OCI-LY7 (cell line): ENCODE measurements at regions of chr7 and their contacts with region 1.

Region 1: GRCh38 chr7:69953136-69954067 is 355.1 kb downstream of the AUTS2 start:
- DNase-seq: peak; percentile 86
- H3K4me3 ChIP-seq: peak overlapping the region; percentile 42
- H3K27ac ChIP-seq: peak overlapping the region; percentile 96
- H3K4me1 ChIP-seq: peaks cover 70% of the 10 kb centered on the region
- CTCF ChIP-seq: no peak

Region 2: GRCh38 chr7:69564454-69565417 is 388.7 kb before region 1 on chr7:
- CTCF ChIA-PET with region 1: no interaction called
- POLR2A ChIA-PET with region 1: no interaction called
- intact Hi-C with region 1: no loop called
- DNase-seq: peak; percentile 48
- H3K4me3 ChIP-seq: no peak overlapping the region
- H3K27ac ChIP-seq: no peak overlapping the region
- H3K4me1 ChIP-seq: peaks cover 7% of the 10 kb centered on the region
- CTCF ChIP-seq: no peak

Region 3: GRCh38 chr7:69837387-69838068 is 115.9 kb before region 1 on chr7:
- CTCF ChIA-PET with region 1: no interaction called
- POLR2A ChIA-PET with region 1: interaction called, 3 read pairs
- intact Hi-C with region 1: loop called (anchors 5 kb)
- DNase-seq: no peak
- H3K4me3 ChIP-seq: no peak overlapping the region
- H3K27ac ChIP-seq: no peak overlapping the region
- H3K4me1 ChIP-seq: peaks cover 62% of the 10 kb centered on the region
- CTCF ChIP-seq: no peak

Region 4: GRCh38 chr7:70027867-70028266 is 74.5 kb after region 1 on chr7:
- CTCF ChIA-PET with region 1: no interaction called
- POLR2A ChIA-PET with region 1: interaction called, 10 read pairs
- intact Hi-C with region 1: loop called (anchors 2 kb)
- DNase-seq: peak; percentile 82
- H3K4me3 ChIP-seq: peak overlapping the region; percentile 27
- H3K27ac ChIP-seq: peak overlapping the region; percentile 64
- H3K4me1 ChIP-seq: peaks cover 55% of the 10 kb centered on the region
- CTCF ChIP-seq: no peak

Region 5: GRCh38 chr7:70426249-70426880 is 473.0 kb after region 1 on chr7:
- CTCF ChIA-PET with region 1: no interaction called
- POLR2A ChIA-PET with region 1: no interaction called
- intact Hi-C with region 1: loop called (anchors 10 kb)
- DNase-seq: peak; percentile 90
- H3K4me3 ChIP-seq: peak overlapping the region; percentile 46
- H3K27ac ChIP-seq: peak overlapping the region; percentile 91
- H3K4me1 ChIP-seq: peaks cover 57% of the 10 kb centered on the region
- CTCF ChIP-seq: no peak

Region 6: DNA sequence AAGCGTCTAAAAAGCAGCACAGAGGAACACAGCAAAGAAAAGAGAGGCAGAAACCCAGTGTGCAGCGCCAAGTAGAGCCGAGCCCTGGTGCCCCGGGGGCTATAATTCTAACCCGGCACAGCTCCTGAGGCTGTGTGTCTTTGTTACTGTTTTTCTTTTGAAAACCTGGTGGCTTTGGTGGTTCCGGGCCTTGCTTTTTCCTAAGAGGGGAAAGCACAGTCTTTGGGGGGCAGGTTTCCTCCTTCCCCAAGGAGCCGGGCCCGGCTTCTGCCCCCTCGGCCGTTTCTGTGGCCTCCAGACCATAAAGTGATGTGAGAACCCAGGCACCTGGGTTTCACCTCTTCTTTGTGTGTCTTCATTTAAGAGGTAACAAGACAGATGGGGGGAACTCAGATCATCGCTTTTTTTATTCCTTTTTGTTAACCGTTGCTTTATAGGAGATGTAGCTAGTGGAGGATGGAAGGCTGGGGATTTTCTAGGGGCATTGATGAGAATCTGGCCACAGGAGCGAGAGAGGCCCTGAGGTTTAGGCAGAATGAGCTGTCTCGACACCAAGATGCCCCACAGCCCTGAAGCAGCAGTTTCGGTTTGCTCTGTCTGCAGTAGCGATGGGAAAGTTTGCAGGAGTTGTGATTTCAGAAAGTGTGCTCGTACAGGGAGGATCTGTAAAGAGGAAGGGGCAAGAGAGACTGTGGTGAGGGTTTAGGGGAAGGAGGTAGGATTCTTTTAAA is 810.7 kb after region 1 on chr7:
- CTCF ChIA-PET with region 1: no interaction called
- POLR2A ChIA-PET with region 1: no interaction called
- intact Hi-C with region 1: loop called (anchors 5 kb)
- DNase-seq: peak; percentile 70
- H3K4me3 ChIP-seq: peak overlapping the region; percentile 63
- H3K27ac ChIP-seq: peak overlapping the region; percentile 85
- H3K4me1 ChIP-seq: peaks cover 44% of the 10 kb centered on the region
- CTCF ChIP-seq: no peak